ENCODE measurements at regions of chr10 and their contacts with region 1.

Region 1: GRCh38 chr10:100185364-100186252 is at the start of gene ERLIN1:
- DNase-seq: peak; percentile 84 to 89 (median 89)
- H3K4me3 ChIP-seq: peak within 1 kb of the TSS; percentile 81 to 99 (median 91)
- H3K4me3 Mint-ChIP-seq: peak within 1 kb of the TSS; percentile 90 to 99
- H3K27ac ChIP-seq: peak within 1 kb of the TSS; percentile 97 to 98
- H3K27ac Mint-ChIP-seq: peak within 1 kb of the TSS; percentile 96 to 99 (median 98)
- H3K4me1 ChIP-seq: peaks cover 50 to 53% of the 10 kb centered on the region in 2 donors
- H3K4me1 Mint-ChIP-seq: peaks cover 62% of the 10 kb centered on the region
- H3K27me3 ChIP-seq: no peaks in the 10 kb centered on the region
- H3K27me3 Mint-ChIP-seq: peaks cover 0 to 2% (median 0%) of the 10 kb centered on the region in 3 donors
- CTCF ChIP-seq: no peak
- polyA plus RNA-seq, gene ERLIN1: 14.5 to 31.4 (median 18.7) TPM

Region 2: GRCh38 chr10:100229819-100230422 is 44.3 kb after region 1 on chr10:
- intact Hi-C with region 1: loop called in 1 of 2 experiments (anchors 5 kb)
- DNase-seq: no peak
- H3K4me3 ChIP-seq: peak overlapping the region; percentile 85 to 99 (median 89)
- H3K4me3 Mint-ChIP-seq: peak overlapping the region; percentile 89 to 99
- H3K27ac ChIP-seq: peak overlapping the region; percentile 31 to 91
- H3K27ac Mint-ChIP-seq: peak overlapping the region; percentile 84 to 95 (median 92)
- H3K4me1 ChIP-seq: peaks cover 11 to 18% of the 10 kb centered on the region in 2 donors
- H3K4me1 Mint-ChIP-seq: peaks cover 25% of the 10 kb centered on the region
- H3K27me3 ChIP-seq: no peaks in the 10 kb centered on the region
- H3K27me3 Mint-ChIP-seq: no peaks in the 10 kb centered on the region
- CTCF ChIP-seq: no peak

Region 3: DNA sequence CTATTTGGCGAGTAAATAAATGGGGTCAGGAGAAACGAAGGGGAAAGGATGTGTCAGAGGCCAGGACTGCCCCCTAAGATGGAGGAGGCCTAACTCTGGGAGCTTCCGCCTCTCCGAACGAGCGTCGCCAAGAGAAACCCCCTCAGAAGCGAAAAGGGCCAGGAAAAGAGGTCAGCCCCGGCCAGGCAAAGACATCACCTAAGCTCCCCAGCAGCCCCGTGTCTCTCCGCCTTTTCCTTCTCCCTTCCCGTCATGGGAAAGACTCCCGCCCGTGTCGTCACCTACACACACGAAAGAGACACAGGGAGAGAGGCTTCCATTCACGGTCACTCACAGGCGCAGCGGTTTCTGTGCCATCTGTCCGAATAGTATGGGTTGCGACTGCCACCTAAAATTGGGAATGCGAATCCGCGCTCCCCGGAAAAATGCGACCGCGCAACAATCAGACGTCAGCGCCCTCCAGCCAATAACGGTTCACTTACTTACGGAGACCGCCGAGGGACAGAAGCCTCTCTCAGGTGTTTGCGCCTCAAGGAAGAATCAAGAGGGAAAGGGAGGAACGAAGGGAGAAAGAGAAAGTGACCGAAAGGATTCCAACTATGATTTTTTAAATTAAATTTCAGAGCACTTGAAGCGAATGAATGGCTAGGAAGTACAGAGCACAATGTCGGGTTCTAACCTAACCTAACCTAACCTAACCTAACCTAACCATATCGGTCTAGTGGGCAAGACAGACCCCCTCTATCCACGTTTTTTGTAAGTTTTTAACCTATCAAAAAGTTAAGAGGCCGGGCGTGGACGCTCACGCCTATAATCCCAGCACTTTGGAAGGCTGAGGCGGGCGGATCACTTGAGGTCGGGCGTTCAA is 81.9 kb after region 1 on chr10 and contains the start of gene CWF19L1:
- intact Hi-C with region 1: loop called in 1 of 2 experiments (anchors 10 kb)
- DNase-seq: peak; percentile 54 to 72 (median 61)
- H3K4me3 ChIP-seq: peak within 1 kb of the TSS; percentile 78 to 96 (median 87)
- H3K4me3 Mint-ChIP-seq: peak within 1 kb of the TSS; percentile 98 to 99
- H3K27ac ChIP-seq: peak within 1 kb of the TSS; percentile 77 to 93
- H3K27ac Mint-ChIP-seq: peak within 1 kb of the TSS; percentile 96 to 99 (median 98)
- H3K4me1 ChIP-seq: peaks cover 16 to 18% of the 10 kb centered on the region in 2 donors
- H3K4me1 Mint-ChIP-seq: peaks cover 20% of the 10 kb centered on the region
- H3K27me3 ChIP-seq: no peaks in the 10 kb centered on the region
- H3K27me3 Mint-ChIP-seq: peaks cover 0 to 5% (median 0%) of the 10 kb centered on the region in 3 donors
- CTCF ChIP-seq: no peak
- polyA plus RNA-seq, gene CWF19L1: 19.9 to 29.3 (median 22.2) TPM

Region 4: GRCh38 chr10:100286051-100287033 is 100.7 kb after region 1 on chr10 and contains the start of gene BLOC1S2:
- intact Hi-C with region 1: loop called in 1 of 2 experiments (anchors 10 kb)
- DNase-seq: peak; percentile 86 to 89 (median 87)
- H3K4me3 ChIP-seq: peak within 1 kb of the TSS; percentile 90 to 93 (median 92)
- H3K4me3 Mint-ChIP-seq: peak within 1 kb of the TSS; percentile 97 to 99
- H3K27ac ChIP-seq: peak within 1 kb of the TSS; percentile 96 to 98
- H3K27ac Mint-ChIP-seq: peak within 1 kb of the TSS; percentile 98 to 100 (median 99)
- H3K4me1 ChIP-seq: peaks cover 50 to 53% of the 10 kb centered on the region in 2 donors
- H3K4me1 Mint-ChIP-seq: peaks cover 41% of the 10 kb centered on the region
- H3K27me3 ChIP-seq: no peaks in the 10 kb centered on the region
- H3K27me3 Mint-ChIP-seq: peaks cover 0 to 2% (median 0%) of the 10 kb centered on the region in 3 donors
- CTCF ChIP-seq: no peak
- polyA plus RNA-seq, gene BLOC1S2: 37.9 to 142 (median 111) TPM